ENCODE measurements at regions of chr3 and their contacts with region 1.

Region 1: DNA sequence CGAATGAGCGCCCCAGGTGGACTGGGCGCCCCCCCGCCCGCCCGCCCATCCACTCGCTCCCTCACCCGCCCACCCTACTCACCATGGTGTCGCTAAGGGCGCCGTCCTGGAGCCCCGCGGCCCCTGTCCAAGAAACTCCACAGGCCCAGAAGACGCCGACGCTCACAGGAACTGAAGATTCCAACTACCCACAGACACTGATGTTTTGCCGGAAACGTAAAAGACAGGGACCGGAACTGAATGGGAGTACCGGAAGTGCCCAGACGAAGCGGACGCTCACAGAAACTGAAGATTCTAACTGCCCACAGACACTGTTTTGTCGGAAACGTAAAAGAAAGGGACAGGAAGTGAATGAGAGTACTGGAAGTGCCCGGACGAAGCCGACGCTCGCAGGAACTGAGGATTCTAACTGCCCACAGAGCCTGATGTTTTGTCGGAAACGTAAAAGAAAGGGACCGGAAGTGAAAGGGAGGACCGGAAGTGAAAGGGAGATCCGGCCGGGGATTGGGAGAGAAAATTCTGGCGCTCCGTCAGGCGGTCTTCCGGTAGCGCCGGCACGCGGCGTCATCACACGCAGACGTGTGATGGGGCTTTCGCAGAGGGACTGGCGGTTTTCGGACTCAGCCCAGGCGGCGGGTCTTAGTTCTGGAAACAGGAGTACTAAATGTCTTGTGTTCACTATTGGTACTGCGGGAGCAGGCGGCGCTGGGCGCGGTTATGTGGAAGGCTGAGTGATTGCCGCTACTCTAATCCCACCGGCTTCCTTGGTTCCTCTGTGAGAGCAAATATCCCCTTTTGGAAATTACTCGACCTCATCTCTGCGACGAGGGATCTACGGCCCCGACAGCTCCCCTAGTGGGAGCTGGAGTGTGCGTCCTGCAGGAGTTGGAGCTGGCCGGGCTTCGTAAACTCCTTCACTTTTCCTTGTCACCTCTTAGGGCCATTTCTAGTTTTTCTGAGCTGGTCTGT is at the start of gene ISY1:
- DNase-seq: peak; percentile 89
- H3K4me3 Mint-ChIP-seq: peak within 1 kb of the TSS; percentile 88
- H3K27ac Mint-ChIP-seq: peak within 1 kb of the TSS; percentile 98
- H3K4me1 Mint-ChIP-seq: peaks cover 27% of the 10 kb centered on the region
- H3K27me3 Mint-ChIP-seq: no peaks in the 10 kb centered on the region
- total RNA-seq, gene ISY1: 71.4 and 78.0 TPM in 2 replicates

Region 2: GRCh38 chr3:129052675-129053074 is 108.5 kb before region 1 on chr3:
- intact Hi-C with region 1: loop called (anchors 1 kb)
- DNase-seq: no peak
- H3K4me3 Mint-ChIP-seq: no peak overlapping the region
- H3K27ac Mint-ChIP-seq: no peak overlapping the region
- H3K4me1 Mint-ChIP-seq: peaks cover 6% of the 10 kb centered on the region
- H3K27me3 Mint-ChIP-seq: peaks cover 11% of the 10 kb centered on the region

Region 3: DNA sequence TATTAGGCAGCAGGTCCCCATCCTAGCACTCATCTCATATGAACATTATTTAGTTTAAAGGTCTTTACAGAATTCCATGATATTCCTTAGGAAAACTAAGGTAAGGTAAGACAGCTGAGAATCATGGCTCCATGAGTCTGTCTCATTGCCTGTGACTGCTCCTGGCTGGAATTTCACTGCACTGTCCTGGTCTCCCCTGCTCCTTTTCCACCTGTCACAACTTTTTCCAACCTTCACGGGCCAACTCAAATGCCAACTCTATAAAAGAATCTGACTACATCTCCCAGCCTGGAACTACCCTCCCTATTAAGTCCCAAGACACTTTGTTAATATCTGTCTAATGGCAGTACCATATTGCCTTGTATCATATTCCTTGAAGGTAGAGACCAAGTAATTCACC is 14.9 kb after region 1 on chr3:
- intact Hi-C with region 1: loop called (anchors 2 kb)
- DNase-seq: no peak
- H3K4me3 Mint-ChIP-seq: peak overlapping the region; percentile 1
- H3K27ac Mint-ChIP-seq: peak overlapping the region; percentile 7
- H3K4me1 Mint-ChIP-seq: peaks cover 55% of the 10 kb centered on the region
- H3K27me3 Mint-ChIP-seq: no peaks in the 10 kb centered on the region